ENCODE measurements at regions of chr14 and their contacts with region 1.

Region 1: GRCh38 chr14:60091550-60092530 is at the start of gene PCNX4:
- DNase-seq: peak; percentile 97
- H3K4me3 Mint-ChIP-seq: peak within 1 kb of the TSS; percentile 98
- H3K27ac Mint-ChIP-seq: peak within 1 kb of the TSS; percentile 98
- H3K4me1 Mint-ChIP-seq: peaks cover 35% of the 10 kb centered on the region
- H3K27me3 Mint-ChIP-seq: no peaks in the 10 kb centered on the region
- total RNA-seq, gene PCNX4: 39.8 and 45.5 TPM in 2 replicates

Region 2: DNA sequence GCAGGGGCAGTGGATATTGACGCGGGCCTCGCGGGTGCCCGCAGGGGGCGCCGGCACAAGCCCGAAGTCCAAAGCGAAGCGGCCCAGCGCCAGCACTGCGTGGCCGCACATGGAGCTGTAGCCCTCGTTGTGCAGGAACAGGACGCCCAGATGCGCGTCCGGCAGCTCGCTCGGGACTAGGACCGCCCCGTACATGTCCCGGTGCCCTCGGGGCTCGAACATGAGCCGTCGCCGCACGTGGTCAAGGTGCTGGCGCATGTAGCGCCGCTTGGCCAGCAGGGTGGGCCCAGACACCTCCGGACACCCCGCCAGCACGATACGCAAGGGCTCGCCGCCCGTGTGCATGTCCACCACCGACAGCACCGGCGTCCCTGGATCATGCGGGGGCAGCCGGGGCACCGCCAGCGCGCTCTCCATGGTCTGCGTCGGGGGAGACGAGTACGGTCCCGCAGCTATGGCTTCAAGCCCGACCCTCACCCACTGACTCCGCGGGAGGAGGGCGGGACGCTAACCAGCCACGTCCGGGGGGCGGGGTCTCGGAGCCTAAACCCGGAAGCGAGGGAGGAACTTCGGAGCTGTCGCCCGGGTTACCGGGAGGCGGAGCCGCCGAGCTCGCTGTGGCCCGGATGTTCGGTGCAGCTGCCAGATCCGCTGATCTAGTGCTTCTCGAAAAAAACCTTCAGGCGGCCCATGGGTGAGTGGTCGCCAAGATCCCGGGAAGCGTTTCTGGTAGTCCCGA is 607.8 kb before region 1 on chr14 and contains the starts of genes JKAMP and L3HYPDH:
- intact Hi-C with region 1: loop called (anchors 5 kb)
- DNase-seq: peak; percentile 99
- H3K4me3 Mint-ChIP-seq: peak within 1 kb of the TSS; percentile 96
- H3K27ac Mint-ChIP-seq: peak within 1 kb of the TSS; percentile 93
- H3K4me1 Mint-ChIP-seq: peaks cover 53% of the 10 kb centered on the region
- H3K27me3 Mint-ChIP-seq: no peaks in the 10 kb centered on the region
- total RNA-seq, gene JKAMP: 27.9 and 28.6 TPM in 2 replicates
- total RNA-seq, gene L3HYPDH: 20.8 TPM in 2 replicates

Region 3: DNA sequence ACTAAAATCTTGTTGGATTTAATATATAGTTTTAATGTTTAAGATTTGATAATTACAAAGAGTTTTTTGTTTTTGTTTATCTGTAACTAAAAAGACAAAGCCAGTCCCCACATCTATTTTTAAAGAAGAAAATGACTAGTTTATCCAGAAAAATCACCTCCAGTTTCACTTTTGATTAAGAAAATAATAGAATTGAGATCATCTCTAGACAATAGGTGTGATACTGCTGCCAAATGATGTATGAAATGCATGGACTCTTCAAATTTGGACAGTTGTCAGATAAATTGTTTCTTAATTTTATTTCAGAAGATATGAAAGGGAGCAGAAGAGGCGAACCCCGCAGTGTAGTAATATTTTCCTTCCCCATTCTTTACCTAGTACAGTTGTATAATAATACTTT is 19.9 kb after region 1 on chr14:
- intact Hi-C with region 1: loop called (anchors 2 kb)
- DNase-seq: no peak
- H3K4me3 Mint-ChIP-seq: no peak overlapping the region
- H3K27ac Mint-ChIP-seq: no peak overlapping the region
- H3K4me1 Mint-ChIP-seq: peaks cover 22% of the 10 kb centered on the region
- H3K27me3 Mint-ChIP-seq: no peaks in the 10 kb centered on the region

Region 4: GRCh38 chr14:60164712-60165546 is 73.1 kb after region 1 on chr14 and contains the start of gene DHRS7:
- intact Hi-C with region 1: loop called (anchors 1 kb)
- DNase-seq: peak; percentile 89
- H3K4me3 Mint-ChIP-seq: peak within 1 kb of the TSS; percentile 98
- H3K27ac Mint-ChIP-seq: peak within 1 kb of the TSS; percentile 99
- H3K4me1 Mint-ChIP-seq: peaks cover 30% of the 10 kb centered on the region
- H3K27me3 Mint-ChIP-seq: no peaks in the 10 kb centered on the region
- total RNA-seq, gene DHRS7: 42.9 TPM in 2 replicates

Region 5: GRCh38 chr14:60248697-60249318 is 157.0 kb after region 1 on chr14 and contains the start of gene PPM1A:
- intact Hi-C with region 1: loop called (anchors 1 kb)
- DNase-seq: peak; percentile 97
- H3K4me3 Mint-ChIP-seq: peak within 1 kb of the TSS; percentile 93
- H3K27ac Mint-ChIP-seq: peak within 1 kb of the TSS; percentile 100
- H3K4me1 Mint-ChIP-seq: peaks cover 47% of the 10 kb centered on the region
- H3K27me3 Mint-ChIP-seq: no peaks in the 10 kb centered on the region
- total RNA-seq, gene PPM1A: 42.9 and 43.9 TPM in 2 replicates

Region 6: GRCh38 chr14:60945984-60946383 is 854.1 kb after region 1 on chr14:
- intact Hi-C with region 1: no loop called
- DNase-seq: no peak
- H3K4me3 Mint-ChIP-seq: no peak overlapping the region
- H3K27ac Mint-ChIP-seq: peak overlapping the region; percentile 22
- H3K4me1 Mint-ChIP-seq: peaks cover 9% of the 10 kb centered on the region
- H3K27me3 Mint-ChIP-seq: no peaks in the 10 kb centered on the region

Measured in activated CD4-positive, alpha-beta T cell treated with anti-CD3 and anti-CD28 coated beads, Interleukin-2, amount 10 ng/mL, durations not matched to agents 24 days and 14 days (primary cell).